Activated CD8-positive, alpha-beta memory T cell treated with anti-CD3 and anti-CD28 coated beads, Interleukin-2, amount 10 ng/mL, durations not matched to agents 7 days and 5 days (primary cell): ENCODE measurements at regions of chr1 and their contacts with region 1.

Region 1: GRCh38 chr1:40404670-40405462 is 31.3 kb downstream of the SMAP2 start:
- DNase-seq: no peak
- ATAC-seq: peak; percentile 50
- H3K4me3 Mint-ChIP-seq: peak overlapping the region; percentile 4
- H3K27ac Mint-ChIP-seq: peak overlapping the region; percentile 82
- H3K4me1 Mint-ChIP-seq: peaks cover 54% of the 10 kb centered on the region
- H3K27me3 Mint-ChIP-seq: no peaks in the 10 kb centered on the region

Region 2: DNA sequence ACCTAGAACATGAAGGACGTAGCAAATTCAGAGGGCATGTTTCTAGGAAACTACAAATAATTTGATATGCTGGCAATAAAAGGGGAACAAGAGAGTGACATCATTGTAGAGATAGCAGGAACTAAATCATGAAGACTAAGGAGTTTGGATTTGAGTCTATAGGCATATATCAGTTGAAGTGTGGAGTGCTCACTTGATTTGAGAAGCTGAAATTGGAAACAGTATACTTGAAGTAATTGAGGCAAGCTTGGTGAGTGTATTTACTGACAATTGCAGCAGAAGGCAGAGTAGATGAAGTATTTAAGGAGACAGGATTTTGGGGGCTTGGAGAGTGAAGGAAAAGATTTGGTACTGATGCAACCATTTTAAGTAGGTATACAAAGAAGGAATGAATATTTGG is 163.5 kb before region 1 on chr1:
- CTCF ChIA-PET with region 1: no interaction called
- DNase-seq: no peak
- ATAC-seq: peak; percentile 31
- H3K4me3 Mint-ChIP-seq: peak overlapping the region; percentile 8
- H3K27ac Mint-ChIP-seq: peak overlapping the region; percentile 83
- H3K4me1 Mint-ChIP-seq: peaks cover 55% of the 10 kb centered on the region
- H3K27me3 Mint-ChIP-seq: no peaks in the 10 kb centered on the region

Region 3: DNA sequence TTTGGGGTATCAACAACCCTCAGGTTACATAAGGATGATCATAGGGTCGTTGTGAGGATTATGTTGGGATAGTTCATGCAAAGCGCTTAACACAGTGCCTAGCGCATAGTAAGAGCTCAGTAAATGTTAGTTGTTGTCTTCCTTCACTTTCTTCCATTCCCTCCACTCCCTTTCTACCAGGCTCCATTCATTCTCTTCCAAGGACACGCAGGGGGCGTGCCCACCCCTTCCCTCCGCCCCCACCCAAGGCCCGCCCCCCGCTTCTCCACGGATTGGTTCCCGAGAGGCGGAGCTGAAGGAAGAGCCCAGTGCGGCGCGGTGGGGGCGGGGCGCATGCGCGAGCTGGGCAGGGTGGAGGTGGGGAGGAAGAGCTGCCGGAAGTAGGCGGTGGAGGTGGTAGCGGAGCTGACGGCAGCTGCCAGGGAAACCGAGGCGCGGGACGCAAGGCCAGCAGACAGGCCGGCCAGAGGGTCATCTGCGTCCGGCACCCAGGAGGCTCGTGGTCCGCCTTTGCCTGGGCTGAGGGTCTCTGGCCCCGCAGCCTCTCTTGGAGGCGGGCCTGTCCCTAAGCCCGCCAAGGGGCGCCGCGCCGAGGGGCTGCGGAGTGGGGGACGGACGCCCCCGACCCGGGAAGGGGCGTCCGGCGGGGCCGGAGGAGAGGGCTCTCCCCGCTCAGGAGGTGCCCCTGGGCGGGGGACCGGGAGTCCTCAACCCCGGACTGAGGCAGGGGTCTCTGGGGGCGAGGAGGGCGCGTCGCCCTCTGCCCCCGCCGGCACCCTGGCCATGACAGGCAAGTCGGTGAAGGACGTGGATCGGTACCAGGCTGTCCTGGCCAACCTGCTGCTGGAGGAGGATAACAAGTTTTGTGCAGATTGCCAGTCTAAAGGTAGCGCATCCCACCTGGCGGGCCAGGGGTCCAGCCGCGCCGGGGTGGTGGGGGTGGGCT is 31.3 kb before region 1 on chr1 and contains the start of gene SMAP2:
- CTCF ChIA-PET with region 1: interaction called, 22 read pairs
- DNase-seq: peak; percentile 97
- ATAC-seq: peak; percentile 92
- H3K4me3 Mint-ChIP-seq: peak within 1 kb of the TSS; percentile 98
- H3K27ac Mint-ChIP-seq: peak within 1 kb of the TSS; percentile 98
- H3K4me1 Mint-ChIP-seq: peaks cover 42% of the 10 kb centered on the region
- H3K27me3 Mint-ChIP-seq: no peaks in the 10 kb centered on the region
- total RNA-seq, gene SMAP2: 116 to 145 TPM

Region 4: DNA sequence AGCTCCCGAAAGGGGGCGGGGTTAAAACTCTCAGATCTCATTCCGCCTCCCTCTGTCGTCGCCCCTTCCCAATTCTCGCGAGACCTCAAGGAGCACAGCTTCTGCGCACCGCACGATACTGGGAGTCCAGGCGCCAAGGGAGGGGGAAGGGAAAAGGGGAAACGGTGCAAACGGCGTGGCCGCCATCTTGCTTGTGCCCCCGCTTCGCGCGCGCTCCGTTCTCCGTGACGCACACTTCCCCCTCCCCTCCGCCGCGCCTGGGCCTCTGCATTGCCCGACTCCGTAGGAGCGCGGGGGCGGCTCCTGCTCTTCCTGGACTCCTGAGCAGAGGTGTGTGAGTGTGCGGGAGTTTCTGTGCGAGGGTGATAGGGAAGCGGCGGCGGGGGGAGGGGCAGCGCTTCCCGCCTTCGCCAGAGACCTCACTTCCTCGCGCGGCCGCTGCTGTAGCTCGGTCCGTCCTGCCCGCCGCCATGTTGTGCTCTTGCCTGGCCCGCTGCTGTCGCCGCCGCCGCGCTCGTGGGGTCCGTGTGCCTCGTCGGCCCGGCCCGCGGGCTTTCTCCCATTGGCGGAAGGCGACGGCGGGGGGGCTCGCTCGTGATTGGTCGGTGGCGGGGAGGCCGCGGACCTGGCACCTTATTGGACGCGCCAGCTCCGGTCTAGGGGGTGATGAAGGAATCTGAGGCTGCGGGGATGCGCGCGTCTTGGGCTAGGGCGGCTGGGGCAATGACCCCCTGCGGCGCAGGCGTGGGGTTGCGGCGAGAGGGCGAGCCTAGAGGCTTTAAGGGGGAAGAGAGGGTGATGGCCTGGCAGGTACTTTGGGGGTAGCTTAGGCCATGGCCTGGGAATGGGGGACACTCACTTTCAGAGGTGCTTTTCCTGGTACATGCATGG is 286.9 kb after region 1 on chr1 and contains the start of gene NFYC:
- CTCF ChIA-PET with region 1: no interaction called
- DNase-seq: peak; percentile 99
- ATAC-seq: peak; percentile 88
- H3K4me3 Mint-ChIP-seq: peak within 1 kb of the TSS; percentile 90
- H3K27ac Mint-ChIP-seq: peak within 1 kb of the TSS; percentile 90
- H3K4me1 Mint-ChIP-seq: peaks cover 56% of the 10 kb centered on the region
- H3K27me3 Mint-ChIP-seq: no peaks in the 10 kb centered on the region
- total RNA-seq, gene NFYC: 71.1 to 91.2 TPM